Dorsolateral prefrontal cortex (tissue), 120 donors: ENCODE measurements at regions of chr18 and their contacts with region 1.

Region 1: DNA sequence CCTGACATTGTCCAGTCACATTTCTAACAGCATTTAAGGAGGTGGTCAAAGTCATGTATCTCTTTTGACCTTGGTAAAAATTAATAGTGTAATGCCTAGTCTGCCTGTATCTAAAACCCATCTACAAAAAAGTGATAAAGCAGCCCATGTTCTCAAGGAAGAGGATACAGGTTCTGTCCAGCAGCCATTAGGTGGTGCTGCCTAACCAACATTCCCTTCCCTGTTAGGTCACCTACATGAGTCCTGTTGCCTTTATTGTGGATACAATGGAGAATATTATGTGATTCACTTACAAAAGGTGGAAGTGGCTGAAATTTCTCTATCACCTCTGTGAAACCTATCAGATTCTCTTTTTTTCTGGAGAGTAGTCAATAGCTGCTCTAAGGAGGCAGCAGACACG is 52.5 kb downstream of the AQP4 start:
- DNase-seq: peak in 2 of 10 donors; percentile 52 to 60
- H3K4me3 ChIP-seq: no peak overlapping the region
- H3K27ac ChIP-seq: no peak overlapping the region
- H3K27me3 ChIP-seq: no peaks in the 10 kb centered on the region
- CTCF ChIP-seq: peak in 52 of 56 donors; percentile 13 to 73 (median 52)

Region 2: GRCh38 chr18:26764628-26765027 is 48.4 kb before region 1 on chr18:
- intact Hi-C with region 1: no loop called
- DNase-seq: no peak
- H3K4me3 ChIP-seq: no peak overlapping the region
- H3K27ac ChIP-seq: no peak overlapping the region
- H3K27me3 ChIP-seq: no peaks in the 10 kb centered on the region
- CTCF ChIP-seq: no peak

Region 3: GRCh38 chr18:26963292-26963691 is 150.2 kb after region 1 on chr18:
- intact Hi-C with region 1: loop called (anchors 10 kb)
- DNase-seq: no peak
- H3K4me3 ChIP-seq: no peak overlapping the region
- H3K27ac ChIP-seq: peak overlapping the region in 3 of 59 donors; percentile 10 to 61 (median 27)
- H3K27me3 ChIP-seq: no peaks in the 10 kb centered on the region
- CTCF ChIP-seq: peak in 48 of 56 donors; percentile 12 to 70 (median 42)

Region 4: DNA sequence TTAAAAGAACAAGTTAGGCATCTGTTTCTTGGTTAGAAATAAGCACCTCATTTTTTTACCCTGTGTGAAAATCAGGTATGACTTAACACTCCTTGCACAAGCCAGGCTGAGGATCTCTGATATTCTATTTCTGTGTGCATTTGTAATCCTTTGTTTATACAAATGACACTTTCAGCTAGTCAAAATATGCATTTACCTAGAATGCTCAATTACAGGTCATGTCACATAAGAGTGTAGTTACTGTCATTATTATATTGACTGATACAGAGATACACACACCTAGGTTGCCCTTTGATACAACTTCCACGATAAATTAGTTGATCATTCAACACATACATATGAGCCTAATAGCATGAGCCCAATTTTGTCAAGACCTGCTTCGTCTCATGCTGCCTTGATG is 227.8 kb after region 1 on chr18:
- intact Hi-C with region 1: no loop called
- DNase-seq: no peak
- H3K4me3 ChIP-seq: no peak overlapping the region
- H3K27ac ChIP-seq: no peak overlapping the region
- H3K27me3 ChIP-seq: no peaks in the 10 kb centered on the region
- CTCF ChIP-seq: no peak